CD8-positive, alpha-beta memory T cell (primary cell): ENCODE measurements at regions of chr2 and their contacts with region 1.

Region 1: DNA sequence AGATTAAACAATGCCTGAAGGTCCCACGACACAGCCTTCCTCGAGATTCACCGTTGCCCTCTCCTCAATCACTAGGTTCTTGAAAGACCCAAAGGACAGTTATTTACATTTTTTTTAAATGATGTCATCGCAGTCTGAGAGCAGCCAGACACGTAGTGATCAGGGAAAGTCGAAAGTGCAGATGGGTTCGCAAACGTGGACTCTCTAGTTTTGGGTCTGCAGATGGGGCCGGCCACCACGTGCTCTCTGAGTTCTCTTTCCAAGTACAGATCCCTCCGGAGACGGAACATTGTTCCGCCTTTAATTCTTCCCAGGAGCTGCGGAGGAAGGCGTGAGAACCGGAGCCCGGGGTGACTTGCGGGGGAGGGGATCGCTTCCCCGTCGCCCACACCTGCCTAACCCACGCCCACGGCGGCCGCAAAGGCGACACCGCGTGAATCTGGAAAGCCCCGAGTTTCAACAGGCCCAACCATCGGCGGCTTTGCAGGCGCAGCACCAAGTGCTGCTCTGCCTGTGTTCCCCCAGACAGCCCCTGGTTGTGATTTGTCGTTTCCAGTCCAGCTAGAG is 54.3 kb downstream of the PKDCC start:
- DNase-seq: peak; percentile 91 to 98 (median 97)
- H3K4me3 ChIP-seq: peak overlapping the region; percentile 74
- H3K4me3 Mint-ChIP-seq: peak overlapping the region; percentile 76 to 91 (median 82)
- H3K27ac ChIP-seq: peak overlapping the region; percentile 97
- H3K27ac Mint-ChIP-seq: peak overlapping the region in 2 of 8 donors; percentile 95 to 100
- H3K4me1 ChIP-seq: peaks cover 84% of the 10 kb centered on the region
- H3K4me1 Mint-ChIP-seq: peaks cover 37 to 51% (median 37%) of the 10 kb centered on the region in 3 donors
- H3K27me3 ChIP-seq: no peaks in the 10 kb centered on the region
- H3K27me3 Mint-ChIP-seq: peaks cover 0 to 2% of the 10 kb centered on the region in 2 donors

Region 2: DNA sequence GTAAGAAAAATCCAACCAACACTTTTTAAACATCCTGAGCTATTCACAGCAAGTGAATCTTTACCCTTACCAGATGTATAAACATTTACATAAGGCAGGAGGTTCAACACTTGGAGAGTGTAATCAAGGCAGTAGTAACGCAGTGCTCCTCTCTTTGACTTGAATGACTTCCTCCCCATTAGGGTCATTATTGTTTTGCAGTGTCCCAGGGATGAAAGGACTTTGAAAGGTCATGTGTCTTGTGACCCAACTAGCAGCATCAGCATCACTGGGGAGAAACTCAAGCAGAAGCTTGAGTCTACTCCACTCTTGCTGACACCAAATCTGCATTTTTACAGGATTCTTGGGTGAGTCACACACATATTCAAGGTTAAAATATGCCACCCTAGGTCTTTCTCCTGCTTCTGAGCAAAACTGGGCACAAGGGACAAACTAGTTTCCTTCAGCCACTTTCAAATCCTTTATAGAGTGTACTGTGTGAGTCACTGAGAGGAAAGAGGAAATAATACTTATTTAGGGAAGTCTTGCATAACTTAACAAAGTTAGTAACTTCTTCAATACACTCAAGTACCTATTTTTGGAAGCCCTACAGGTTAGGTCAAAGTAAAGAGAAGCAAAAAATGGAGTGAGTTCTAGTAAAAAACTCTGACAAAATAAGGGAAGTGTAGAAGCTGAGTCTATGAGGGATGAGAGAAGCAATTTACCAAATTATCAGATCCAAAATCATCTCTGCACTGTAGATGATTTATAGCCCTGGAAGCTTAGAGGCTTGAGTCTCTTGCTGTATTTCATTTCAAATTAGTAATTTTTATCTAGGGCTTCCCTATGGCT is 16.0 kb after region 1 on chr2:
- CTCF ChIA-PET with region 1: interaction called, 12 read pairs
- POLR2A ChIA-PET with region 1: interaction called, 7 read pairs
- DNase-seq: no peak
- H3K4me3 ChIP-seq: no peak overlapping the region
- H3K4me3 Mint-ChIP-seq: peak overlapping the region in 3 of 7 donors; percentile 8 to 46 (median 10)
- H3K27ac ChIP-seq: no peak overlapping the region
- H3K27ac Mint-ChIP-seq: peak overlapping the region; percentile 44 to 90 (median 82)
- H3K4me1 ChIP-seq: peaks cover 49% of the 10 kb centered on the region
- H3K4me1 Mint-ChIP-seq: peaks cover 46 to 69% (median 69%) of the 10 kb centered on the region in 3 donors
- H3K27me3 ChIP-seq: no peaks in the 10 kb centered on the region
- H3K27me3 Mint-ChIP-seq: no peaks in the 10 kb centered on the region

Region 3: DNA sequence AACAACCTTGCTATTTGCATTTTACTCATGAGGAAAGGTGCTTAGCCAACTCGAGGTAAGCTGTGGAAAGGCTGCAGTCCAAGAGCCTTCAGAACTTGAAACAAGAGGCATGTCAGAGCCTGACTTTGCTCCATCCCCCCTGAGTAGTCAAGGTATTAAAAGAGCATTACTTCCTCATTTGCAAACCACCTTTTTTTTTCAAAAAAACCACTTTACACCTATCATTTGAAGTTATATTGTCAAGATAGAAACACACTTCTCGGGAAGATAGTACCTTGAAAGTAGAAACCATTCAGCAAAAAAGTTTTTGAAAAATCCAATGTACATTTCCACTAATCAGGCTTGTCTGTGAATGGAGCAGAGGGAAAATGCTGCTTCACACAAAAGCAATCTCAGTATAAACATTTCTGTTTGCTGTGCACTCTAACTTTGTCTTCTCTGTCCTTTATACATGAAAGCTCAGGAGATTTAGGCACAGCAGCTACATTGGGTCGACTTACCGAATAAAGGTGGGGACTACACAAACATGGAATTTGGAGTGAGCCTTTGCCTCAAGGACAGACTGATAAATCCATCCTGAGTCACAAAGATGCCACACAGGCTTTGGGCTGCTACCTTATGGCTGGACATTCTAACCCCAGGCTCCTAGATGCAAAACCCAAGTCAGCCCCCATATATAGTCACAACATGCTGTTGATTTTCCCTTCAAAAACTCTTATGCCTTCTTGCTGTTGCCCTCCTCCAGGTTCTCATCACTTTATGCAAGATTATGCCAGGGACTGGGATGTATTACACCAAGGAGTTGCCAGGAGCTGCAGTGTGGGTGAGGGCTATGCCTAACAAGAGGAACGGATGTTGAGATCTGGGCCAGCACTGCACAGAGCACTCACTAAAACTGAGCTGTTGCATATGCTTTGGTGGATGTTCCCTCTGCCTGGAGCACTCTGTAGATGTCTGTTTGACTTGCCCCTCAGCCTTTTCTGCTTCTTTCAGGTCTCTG is 25.6 kb after region 1 on chr2:
- CTCF ChIA-PET with region 1: interaction called, 63 read pairs
- POLR2A ChIA-PET with region 1: interaction called, 62 read pairs
- DNase-seq: peak in 3 of 5 donors; percentile 57 to 73 (median 61)
- H3K4me3 ChIP-seq: peak overlapping the region; percentile 40
- H3K4me3 Mint-ChIP-seq: peak overlapping the region; percentile 36 to 84 (median 76)
- H3K27ac ChIP-seq: peak overlapping the region; percentile 40
- H3K27ac Mint-ChIP-seq: peak overlapping the region; percentile 76 to 100 (median 92)
- H3K4me1 ChIP-seq: peaks cover 97% of the 10 kb centered on the region
- H3K4me1 Mint-ChIP-seq: peaks cover 87 to 97% (median 96%) of the 10 kb centered on the region in 3 donors
- H3K27me3 ChIP-seq: no peaks in the 10 kb centered on the region
- H3K27me3 Mint-ChIP-seq: no peaks in the 10 kb centered on the region

Region 4: GRCh38 chr2:42132966-42133641 is 31.0 kb after region 1 on chr2:
- CTCF ChIA-PET with region 1: interaction called, 63 read pairs
- POLR2A ChIA-PET with region 1: interaction called, 62 read pairs
- DNase-seq: peak; percentile 85 to 97 (median 91)
- H3K4me3 ChIP-seq: peak overlapping the region; percentile 55
- H3K4me3 Mint-ChIP-seq: peak overlapping the region; percentile 24 to 80 (median 77)
- H3K27ac ChIP-seq: peak overlapping the region; percentile 78
- H3K27ac Mint-ChIP-seq: peak overlapping the region; percentile 76 to 100 (median 100)
- H3K4me1 ChIP-seq: peaks cover 85% of the 10 kb centered on the region
- H3K4me1 Mint-ChIP-seq: peaks cover 84 to 96% (median 95%) of the 10 kb centered on the region in 3 donors
- H3K27me3 ChIP-seq: no peaks in the 10 kb centered on the region
- H3K27me3 Mint-ChIP-seq: no peaks in the 10 kb centered on the region

Region 5: GRCh38 chr2:42169100-42169873 is 67.2 kb after region 1 on chr2 and contains the start of gene EML4:
- CTCF ChIA-PET with region 1: interaction called, 34 read pairs
- POLR2A ChIA-PET with region 1: interaction called, 15 read pairs
- DNase-seq: peak; percentile 83 to 92 (median 89)
- H3K4me3 ChIP-seq: peak within 1 kb of the TSS; percentile 87
- H3K4me3 Mint-ChIP-seq: peak within 1 kb of the TSS in 2 of 7 donors; percentile 33 to 41
- H3K27ac ChIP-seq: peak within 1 kb of the TSS; percentile 84
- H3K27ac Mint-ChIP-seq: peak within 1 kb of the TSS in 6 of 8 donors; percentile 83 to 92 (median 90)
- H3K4me1 ChIP-seq: peaks cover 23% of the 10 kb centered on the region
- H3K4me1 Mint-ChIP-seq: peaks cover 11 to 33% (median 19%) of the 10 kb centered on the region in 3 donors
- H3K27me3 ChIP-seq: no peaks in the 10 kb centered on the region
- H3K27me3 Mint-ChIP-seq: no peaks in the 10 kb centered on the region
- total RNA-seq, gene EML4: 58.0 to 61.5 TPM

Region 6: DNA sequence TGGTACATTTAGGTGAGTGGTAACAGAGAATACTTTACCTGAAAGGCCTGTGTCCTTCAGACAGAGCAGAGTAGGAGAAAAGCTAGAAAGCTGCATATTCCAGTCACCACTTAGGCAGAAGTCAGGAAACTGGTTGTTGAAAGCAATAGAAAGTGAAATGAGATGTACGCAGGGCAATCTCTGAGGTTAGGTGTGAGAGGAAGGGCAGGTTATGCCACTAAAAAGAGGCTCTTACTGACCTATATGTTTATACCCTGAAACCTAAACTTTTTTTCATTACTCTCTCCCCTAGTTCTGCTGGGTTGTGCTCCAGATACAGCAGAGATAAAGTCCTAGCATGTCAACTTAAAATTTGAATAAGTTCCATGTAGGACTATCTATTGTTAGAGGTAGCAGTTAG is 165.4 kb after region 1 on chr2:
- CTCF ChIA-PET with region 1: no interaction called
- POLR2A ChIA-PET with region 1: no interaction called
- DNase-seq: no peak
- H3K4me3 ChIP-seq: no peak overlapping the region
- H3K4me3 Mint-ChIP-seq: peak overlapping the region in 1 of 7 donors; percentile 30
- H3K27ac ChIP-seq: no peak overlapping the region
- H3K27ac Mint-ChIP-seq: peak overlapping the region in 4 of 8 donors; percentile 20 to 78 (median 52)
- H3K4me1 ChIP-seq: peaks cover 11% of the 10 kb centered on the region
- H3K4me1 Mint-ChIP-seq: peaks cover 22 to 34% (median 24%) of the 10 kb centered on the region in 3 donors
- H3K27me3 ChIP-seq: no peaks in the 10 kb centered on the region
- H3K27me3 Mint-ChIP-seq: peaks cover 0 to 2% of the 10 kb centered on the region in 2 donors